Common myeloid progenitor, CD34-positive (primary cell): ENCODE measurements at regions of chr12 and their contacts with region 1.

Region 1: DNA sequence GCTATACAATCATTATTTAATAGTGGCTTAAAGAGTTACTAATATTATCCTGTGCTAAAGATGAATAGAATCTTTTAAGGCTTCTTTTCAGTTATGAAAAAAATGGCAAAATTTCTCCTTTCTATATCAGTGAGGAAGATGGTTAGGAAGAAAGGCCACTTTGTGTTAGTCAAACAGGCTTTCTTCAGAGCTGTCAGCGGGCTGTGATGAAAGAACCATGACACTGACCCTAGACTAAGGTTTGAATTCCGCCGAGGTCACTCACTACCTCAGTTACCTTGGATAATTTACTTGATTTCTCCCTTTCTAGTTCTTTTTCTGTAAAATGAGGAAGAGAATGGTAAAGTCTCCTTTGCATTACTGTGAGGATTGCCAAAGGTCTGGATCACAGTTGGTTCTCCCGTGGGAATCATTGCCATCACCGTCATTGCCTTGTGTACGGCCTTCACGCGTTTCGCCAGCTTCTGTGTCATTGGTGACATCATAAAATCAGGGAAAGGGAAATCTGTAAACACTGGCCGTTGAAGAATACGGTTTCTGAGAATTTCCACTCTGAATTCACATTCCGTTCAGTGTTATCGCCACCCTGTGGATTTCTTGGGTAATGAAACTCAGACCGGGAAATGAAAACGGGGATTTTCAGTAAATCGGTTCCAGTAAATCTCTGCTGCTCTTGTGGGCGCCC is 26.7 kb upstream of the YBX3 start:
- DNase-seq: peak; percentile 86 to 89 (median 88)
- H3K4me3 ChIP-seq: peak overlapping the region in 6 of 7 experiments; percentile 33 to 74 (median 58)
- H3K27ac ChIP-seq: no peak overlapping the region
- H3K4me1 ChIP-seq: peaks cover 0 to 7% (median 5%) of the 10 kb centered on the region in 4 experiments
- H3K27me3 ChIP-seq: no peaks in the 10 kb centered on the region

Region 2: DNA sequence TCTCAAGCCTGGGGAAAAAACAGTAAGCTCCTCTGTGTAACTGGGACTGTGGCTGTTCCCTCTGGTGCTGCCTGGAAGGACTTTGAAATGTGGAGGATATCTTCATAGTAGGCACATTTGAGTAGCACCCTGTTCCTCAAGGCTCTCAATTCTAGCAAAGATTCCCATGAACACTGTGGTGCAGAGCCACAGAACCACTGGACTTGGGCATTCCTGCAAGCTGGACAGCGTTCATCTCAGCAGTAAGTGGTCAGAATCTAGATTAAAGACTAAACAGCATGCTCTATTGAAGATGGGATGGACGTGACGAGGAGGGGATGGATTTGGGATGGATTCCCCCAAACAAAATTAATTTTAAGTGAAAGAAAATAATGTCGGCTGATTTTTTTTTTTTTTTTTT is 17.3 kb before region 1 on chr12:
- CTCF ChIA-PET with region 1: interaction called, 13 read pairs
- POLR2A ChIA-PET with region 1: no interaction called
- DNase-seq: no peak
- H3K4me3 ChIP-seq: no peak overlapping the region
- H3K27ac ChIP-seq: no peak overlapping the region
- H3K4me1 ChIP-seq: peaks cover 0 to 3% (median 0%) of the 10 kb centered on the region in 4 experiments
- H3K27me3 ChIP-seq: no peaks in the 10 kb centered on the region